GM10248 (cell line): ENCODE measurements at regions of chr2 and their contacts with region 1.

Region 1: GRCh38 chr2:30300456-30301221 is 69.3 kb downstream of the LBH start:
- DNase-seq: no peak
- CTCF ChIP-seq: no peak

Region 2: DNA sequence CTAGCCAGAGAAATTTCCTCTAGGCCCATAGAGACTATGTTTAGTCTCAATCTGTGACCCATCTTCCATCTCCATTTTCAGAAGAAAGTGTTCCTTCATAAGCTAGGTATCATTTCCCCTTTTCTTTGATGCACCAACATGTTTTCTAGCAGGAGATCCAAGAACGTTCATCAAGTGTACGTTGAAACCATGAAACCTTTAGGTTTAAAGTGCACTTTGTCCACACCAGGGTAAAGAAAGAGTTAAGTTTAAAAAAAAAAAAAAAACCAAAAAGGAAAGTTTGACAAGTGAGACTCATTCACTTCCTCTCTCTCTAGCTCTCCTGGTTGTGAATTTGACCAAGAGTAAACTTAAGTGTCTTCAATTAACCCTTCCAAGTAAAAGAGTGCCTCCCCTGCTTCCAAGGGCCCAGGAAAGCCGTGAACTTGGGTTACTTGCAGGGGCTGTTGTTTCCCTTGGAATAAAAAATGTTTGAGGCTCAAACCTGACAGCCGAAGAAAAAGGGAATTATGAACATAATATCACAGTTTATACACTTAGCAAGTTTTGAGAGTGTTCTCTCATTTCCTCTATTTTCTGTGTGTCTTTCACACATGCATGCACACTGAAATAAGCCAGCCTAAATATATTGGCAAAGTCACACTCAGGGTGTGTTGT is 12.7 kb before region 1 on chr2:
- CTCF ChIA-PET with region 1: interaction called, 18 read pairs
- POLR2A ChIA-PET with region 1: no interaction called
- DNase-seq: no peak
- CTCF ChIP-seq: no peak

Region 3: DNA sequence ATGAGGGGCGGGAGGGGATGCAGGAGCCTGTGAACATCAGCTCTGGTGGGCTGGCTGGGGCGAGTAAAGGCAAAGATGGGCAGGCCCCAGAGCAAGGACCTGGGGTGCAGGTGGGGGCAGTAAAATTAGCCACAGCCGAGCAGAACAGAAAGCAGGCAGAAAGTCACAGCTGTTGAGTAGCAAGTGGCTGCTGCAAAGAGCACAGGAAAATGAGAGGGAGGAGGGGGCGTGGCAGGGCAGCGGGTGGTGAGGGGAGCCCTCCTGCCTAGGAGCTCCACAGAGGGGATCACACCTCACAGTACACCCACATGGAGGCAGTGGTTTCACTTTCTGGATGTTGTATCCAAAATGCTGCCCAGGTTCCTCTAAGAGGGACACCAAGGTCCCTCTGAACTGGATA is 10.3 kb after region 1 on chr2:
- CTCF ChIA-PET with region 1: interaction called, 11 read pairs
- POLR2A ChIA-PET with region 1: no interaction called
- DNase-seq: peak; percentile 45
- CTCF ChIP-seq: no peak